K562 (cell line): ENCODE measurements at regions of chrX and their contacts with region 1.

Region 1: DNA sequence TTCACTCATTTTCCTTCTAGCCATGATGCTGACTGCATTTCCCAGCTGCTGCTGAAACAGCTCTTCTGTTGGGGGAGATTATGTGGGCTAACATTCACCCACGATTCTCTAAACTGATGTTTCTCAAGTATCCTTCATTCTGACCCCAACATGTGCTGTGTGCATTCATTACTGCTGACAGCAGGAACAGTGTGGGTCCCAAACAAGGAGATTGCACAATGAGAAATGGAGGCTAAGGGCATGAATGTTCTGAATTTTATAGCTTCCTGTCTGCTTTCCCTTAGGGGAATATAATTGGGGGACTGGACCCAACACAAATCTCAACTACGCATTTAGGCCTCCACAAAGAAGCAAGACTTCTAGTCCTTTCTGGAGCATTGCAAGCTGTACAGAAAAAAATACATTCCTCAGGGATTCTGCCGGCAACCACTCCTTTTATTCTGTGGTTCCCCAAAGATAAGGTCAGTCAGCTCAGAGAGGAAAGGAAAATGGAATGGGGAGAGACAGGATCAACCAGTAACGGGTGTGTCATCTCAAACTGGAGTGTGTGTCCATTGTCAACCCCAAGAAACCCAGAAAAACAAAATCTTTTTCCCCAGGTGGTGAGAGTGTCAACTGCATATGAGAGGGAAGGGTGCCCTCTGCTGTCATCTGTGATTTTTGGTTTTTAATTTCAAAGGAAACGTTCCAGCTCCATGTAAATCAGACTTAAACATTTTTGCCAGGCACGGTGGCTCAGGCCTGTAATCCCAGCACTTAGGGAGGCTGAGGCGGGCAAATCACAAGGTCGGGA is 81.5 kb upstream of the EGFL6 start:
- DNase-seq: peak; percentile 12 to 58 (median 27)
- ATAC-seq: peak; percentile 90
- H3K4me3 ChIP-seq: no peak overlapping the region
- H3K27ac ChIP-seq: no peak overlapping the region
- H3K4me1 ChIP-seq: no peaks in the 10 kb centered on the region
- H3K27me3 ChIP-seq: no peaks in the 10 kb centered on the region; a peak in 2 of 5 replicates
- CTCF ChIP-seq: peak; percentile 50 to 74 (median 73); a peak in 5 of 6 replicates
- EP300 ChIP-seq: no peak
- POLR2A ChIP-seq: no peak
- RAD21 ChIP-seq: peak; percentile 80 to 89

Region 2: DNA sequence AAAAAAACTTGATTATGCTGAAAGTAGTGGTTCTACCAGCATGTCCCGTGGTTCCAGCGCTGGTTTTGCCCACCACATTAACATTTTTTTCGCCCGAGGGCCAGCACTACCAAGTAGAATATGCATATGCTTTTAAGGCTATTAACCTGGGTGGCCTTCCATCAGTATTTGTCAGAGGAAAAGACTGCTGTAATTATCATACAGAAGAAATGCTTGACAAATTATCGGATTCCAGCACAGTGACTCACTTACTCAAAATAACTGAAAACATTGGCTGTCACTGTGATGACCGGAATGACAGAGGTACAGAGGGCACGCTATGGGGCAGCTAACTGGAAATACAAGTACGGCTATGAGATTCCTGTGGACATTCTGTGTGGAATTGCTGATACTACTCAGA is 662.1 kb before region 1 on chrX:
- CTCF ChIA-PET with region 1: no interaction called
- POLR2A ChIA-PET with region 1: no interaction called
- in situ Hi-C with region 1: loop called (anchors 25 kb)
- intact Hi-C with region 1: loop called (anchors 10 kb)
- DNase-seq: no peak
- ATAC-seq: no peak
- H3K4me3 ChIP-seq: no peak overlapping the region
- H3K27ac ChIP-seq: no peak overlapping the region
- H3K4me1 ChIP-seq: no peaks in the 10 kb centered on the region
- H3K27me3 ChIP-seq: peaks cover 5 to 6% of the 10 kb centered on the region in 2 experiments; a peak in 3 of 5 replicates
- CTCF ChIP-seq: no peak
- EP300 ChIP-seq: no peak
- POLR2A ChIP-seq: no peak
- RAD21 ChIP-seq: no peak

Region 3: DNA sequence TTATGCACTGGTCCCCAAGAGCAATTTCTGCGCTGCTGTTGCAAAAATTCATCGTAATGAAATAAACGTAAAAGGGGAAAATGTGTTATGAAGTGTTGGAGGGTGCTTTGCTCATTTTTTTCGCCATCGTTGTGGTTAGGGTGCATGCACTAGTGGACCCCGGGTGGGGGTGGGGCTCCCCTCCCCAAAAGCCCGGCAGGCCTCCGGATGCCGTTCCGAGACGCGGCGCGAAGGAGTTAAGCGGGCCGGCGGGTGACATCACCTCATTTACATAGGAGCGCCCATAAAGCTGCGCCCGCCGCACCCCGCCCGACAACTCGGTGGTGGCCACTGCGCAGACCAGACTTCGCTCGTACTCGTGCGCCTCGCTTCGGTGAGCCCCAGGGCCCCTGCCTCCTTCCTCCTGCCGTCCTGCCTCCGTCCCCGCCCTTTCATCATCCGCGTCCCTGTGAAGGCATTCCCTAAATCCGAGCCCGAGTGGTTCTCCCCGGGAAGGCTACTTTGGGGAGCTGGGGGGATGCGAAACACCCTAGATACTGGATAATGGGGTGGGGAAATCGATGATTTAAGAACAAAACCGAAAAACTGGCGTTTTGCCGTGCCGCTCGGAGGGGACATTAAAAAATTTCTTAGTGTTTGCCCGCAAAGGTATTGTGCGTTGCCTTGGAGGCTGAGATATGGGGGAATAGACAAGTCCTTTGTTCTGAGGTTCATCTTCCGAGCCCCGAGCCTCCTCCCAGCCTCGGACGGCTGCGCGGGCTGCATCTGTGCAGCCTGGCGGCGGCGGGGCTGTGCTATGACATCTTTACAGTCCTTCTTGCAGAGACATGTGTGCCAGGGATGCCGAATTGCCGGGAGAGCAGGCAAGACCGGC is 512.9 kb before region 1 on chrX and contains the start of gene TMSB4X:
- CTCF ChIA-PET with region 1: no interaction called
- POLR2A ChIA-PET with region 1: interaction called, 5 read pairs
- in situ Hi-C with region 1: no loop called
- intact Hi-C with region 1: loop called (anchors 5 kb)
- DNase-seq: peak; percentile 69 to 91 (median 78)
- ATAC-seq: peak; percentile 86
- H3K4me3 ChIP-seq: peak within 1 kb of the TSS; percentile 97
- H3K27ac ChIP-seq: peak within 1 kb of the TSS; percentile 95
- H3K4me1 ChIP-seq: peaks cover 12 to 36% of the 10 kb centered on the region in 2 experiments; a peak in 4 of 5 replicates
- H3K27me3 ChIP-seq: no peaks in the 10 kb centered on the region
- CTCF ChIP-seq: peak in 1 of 3 experiments; percentile 27; a peak in 1 of 6 replicates
- EP300 ChIP-seq: no peak; the same call in 1 of the 2 replicates
- POLR2A ChIP-seq: peak; percentile 99
- RAD21 ChIP-seq: peak; percentile 5 to 18; a peak in 2 of 4 replicates
- polyA plus RNA-seq, gene TMSB4X: 1,688 to 2,035 TPM

Region 4: DNA sequence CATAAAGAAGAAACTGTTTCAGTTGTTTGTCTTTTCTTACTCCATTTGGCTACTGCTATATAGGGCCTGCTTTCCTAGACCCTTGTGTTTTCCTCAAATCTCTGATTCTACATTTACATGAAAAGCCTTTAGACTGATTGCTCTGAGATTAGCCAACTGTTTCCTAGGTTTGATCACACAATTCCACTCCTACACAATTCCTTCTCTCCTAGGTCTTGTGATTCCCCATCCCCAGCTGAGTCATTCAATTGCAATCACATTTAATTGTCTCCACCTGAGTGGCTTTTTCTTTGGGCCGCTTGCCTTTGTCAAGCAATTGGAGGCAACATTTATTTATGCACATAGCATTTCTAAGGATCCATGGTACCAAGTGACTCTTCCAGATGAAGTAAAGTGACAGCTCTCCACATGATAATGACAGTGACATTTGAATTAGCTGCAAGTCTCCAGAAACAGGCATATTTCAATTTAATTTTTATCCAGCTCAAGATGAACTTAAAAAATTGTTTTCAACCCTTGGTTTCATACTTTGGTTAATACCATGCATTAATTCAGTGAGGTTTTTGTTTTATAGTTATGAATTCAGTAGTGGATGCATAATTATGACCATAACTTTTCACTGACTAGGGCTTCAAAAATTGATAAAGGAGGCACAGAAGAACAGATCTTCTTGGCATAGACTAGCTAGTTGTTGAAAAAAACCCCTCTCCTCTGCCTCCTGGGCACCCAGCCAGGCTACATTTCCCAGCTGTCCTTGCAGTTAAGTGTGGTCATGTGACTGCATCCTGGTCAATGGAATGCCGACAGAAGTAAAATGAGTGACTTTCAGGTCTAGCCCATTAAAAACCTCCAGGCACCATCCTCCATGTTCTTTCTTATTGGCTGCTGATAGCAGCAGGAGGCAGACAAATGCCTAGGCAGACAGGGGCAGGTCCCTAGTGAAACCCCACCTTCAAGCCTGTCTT is 203.7 kb before region 1 on chrX:
- CTCF ChIA-PET with region 1: no interaction called
- POLR2A ChIA-PET with region 1: no interaction called
- in situ Hi-C with region 1: no loop called
- intact Hi-C with region 1: loop called (anchors 5 kb)
- DNase-seq: no peak
- ATAC-seq: no peak; the same call in 2 of the 3 replicates
- H3K4me3 ChIP-seq: no peak overlapping the region
- H3K27ac ChIP-seq: peak overlapping the region; percentile 49; the same call in 2 of the 3 replicates
- H3K4me1 ChIP-seq: peaks cover 8 to 36% of the 10 kb centered on the region in 2 experiments; a peak in 4 of 5 replicates
- H3K27me3 ChIP-seq: no peaks in the 10 kb centered on the region
- CTCF ChIP-seq: no peak
- EP300 ChIP-seq: no peak
- POLR2A ChIP-seq: no peak
- RAD21 ChIP-seq: no peak; a peak in 1 of 4 replicates

Region 5: DNA sequence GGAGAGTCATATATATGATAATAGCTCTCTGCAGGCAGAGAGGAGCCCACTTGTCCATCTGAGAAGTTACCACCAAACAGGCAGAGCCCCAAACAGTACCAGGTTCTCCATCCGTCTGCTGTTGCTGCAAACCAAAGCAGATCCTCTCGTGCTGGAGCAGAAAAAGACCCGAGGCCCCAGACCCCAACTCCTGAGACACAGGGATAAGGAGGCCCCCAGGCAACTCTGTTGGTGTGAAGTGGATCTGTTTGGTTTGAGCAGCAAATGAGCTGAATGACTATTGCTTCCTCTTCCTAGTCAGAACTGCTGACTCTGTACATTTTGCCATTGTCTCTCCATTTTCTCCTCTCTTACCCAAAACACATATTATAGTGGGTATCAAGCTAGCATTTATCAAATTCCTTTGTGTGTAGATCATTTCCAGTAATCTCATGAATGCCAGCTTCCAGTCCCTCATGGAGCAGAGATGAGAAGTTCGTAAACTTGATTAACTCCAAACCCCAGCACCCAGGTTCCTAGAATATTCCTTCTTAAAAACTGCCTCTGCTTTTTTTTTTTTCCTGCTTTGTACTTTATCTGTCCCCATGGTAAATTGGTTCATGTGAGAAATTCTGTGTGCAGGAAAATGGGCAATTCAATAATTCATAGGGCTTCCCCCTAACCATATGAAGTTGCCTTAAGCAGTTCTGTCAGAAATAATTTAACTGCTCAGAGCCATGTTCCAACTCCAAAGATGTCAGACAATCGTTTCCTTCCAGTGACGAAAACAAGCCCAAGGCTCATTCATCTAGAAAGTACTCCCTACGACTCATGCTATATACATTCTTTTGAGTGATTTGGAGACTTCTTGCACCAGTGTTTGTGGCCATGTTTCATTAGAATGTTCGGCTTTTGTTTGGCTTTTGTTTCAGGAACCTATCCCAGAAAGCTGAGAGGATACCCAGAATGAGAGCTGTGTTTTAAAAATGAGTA is 69.5 kb before region 1 on chrX:
- CTCF ChIA-PET with region 1: no interaction called
- POLR2A ChIA-PET with region 1: no interaction called
- in situ Hi-C with region 1: no loop called
- intact Hi-C with region 1: no loop called
- DNase-seq: no peak
- ATAC-seq: no peak
- H3K4me3 ChIP-seq: no peak overlapping the region
- H3K27ac ChIP-seq: no peak overlapping the region
- H3K4me1 ChIP-seq: no peaks in the 10 kb centered on the region
- H3K27me3 ChIP-seq: peaks cover 3 to 4% of the 10 kb centered on the region in 2 experiments; a peak in 3 of 5 replicates
- CTCF ChIP-seq: no peak
- EP300 ChIP-seq: no peak
- POLR2A ChIP-seq: no peak
- RAD21 ChIP-seq: no peak

Region 6: DNA sequence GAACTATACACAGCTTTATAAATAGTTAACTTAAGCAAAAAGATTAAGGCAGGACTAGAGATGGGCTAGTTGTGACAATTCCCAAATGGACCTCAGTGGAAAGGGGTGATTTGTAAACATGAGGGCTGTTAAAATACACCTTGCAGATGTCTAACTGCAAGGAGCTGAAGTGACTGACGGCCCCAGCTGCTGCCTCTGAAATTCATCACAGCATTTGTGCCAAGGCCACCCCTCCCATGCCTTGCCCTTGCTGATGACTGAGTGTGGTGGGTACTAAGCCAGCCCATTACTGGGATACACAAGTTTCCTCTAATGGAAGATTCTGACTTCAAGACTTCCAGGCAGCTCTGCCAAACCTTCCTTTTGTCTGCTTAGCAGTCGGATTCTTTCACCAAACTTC is 57.8 kb after region 1 on chrX:
- CTCF ChIA-PET with region 1: no interaction called
- POLR2A ChIA-PET with region 1: no interaction called
- in situ Hi-C with region 1: no loop called
- intact Hi-C with region 1: no loop called
- DNase-seq: no peak
- ATAC-seq: no peak
- H3K4me3 ChIP-seq: no peak overlapping the region
- H3K27ac ChIP-seq: no peak overlapping the region
- H3K4me1 ChIP-seq: no peaks in the 10 kb centered on the region
- H3K27me3 ChIP-seq: no peaks in the 10 kb centered on the region
- CTCF ChIP-seq: no peak
- EP300 ChIP-seq: no peak
- POLR2A ChIP-seq: no peak
- RAD21 ChIP-seq: no peak